ENCODE measurements at regions of chr6 and their contacts with region 1.

Region 1: GRCh38 chr6:159862103-159862502 is 28.7 kb upstream of the MAS1 start:
- DNase-seq: peak in 2 of 9 experiments; percentile 42 to 70
- ATAC-seq: peak; percentile 69
- H3K4me3 ChIP-seq: no peak overlapping the region
- H3K4me3 Mint-ChIP-seq: peak overlapping the region; percentile 10
- H3K27ac ChIP-seq: no peak overlapping the region
- H3K27ac Mint-ChIP-seq: peak overlapping the region; percentile 64
- H3K4me1 ChIP-seq: peaks cover 27% of the 10 kb centered on the region
- H3K4me1 Mint-ChIP-seq: peaks cover 22% of the 10 kb centered on the region
- H3K27me3 ChIP-seq: no peaks in the 10 kb centered on the region
- H3K27me3 Mint-ChIP-seq: peaks cover 3% of the 10 kb centered on the region
- CTCF ChIP-seq: no peak

Region 2: GRCh38 chr6:159800141-159800865 is 61.8 kb before region 1 on chr6 and contains the start of gene PNLDC1:
- CTCF ChIA-PET with region 1: no interaction called
- POLR2A ChIA-PET with region 1: no interaction called
- intact Hi-C with region 1: no loop called
- DNase-seq: no peak
- ATAC-seq: no peak
- H3K4me3 ChIP-seq: no peak within 1 kb of the TSS
- H3K4me3 Mint-ChIP-seq: no peak within 1 kb of the TSS
- H3K27ac ChIP-seq: no peak within 1 kb of the TSS
- H3K27ac Mint-ChIP-seq: no peak within 1 kb of the TSS
- H3K4me1 ChIP-seq: peaks cover 4% of the 10 kb centered on the region
- H3K4me1 Mint-ChIP-seq: peaks cover 20% of the 10 kb centered on the region
- H3K27me3 ChIP-seq: no peaks in the 10 kb centered on the region
- H3K27me3 Mint-ChIP-seq: no peaks in the 10 kb centered on the region
- CTCF ChIP-seq: no peak
- total RNA-seq, gene PNLDC1: not detected

Region 3: DNA sequence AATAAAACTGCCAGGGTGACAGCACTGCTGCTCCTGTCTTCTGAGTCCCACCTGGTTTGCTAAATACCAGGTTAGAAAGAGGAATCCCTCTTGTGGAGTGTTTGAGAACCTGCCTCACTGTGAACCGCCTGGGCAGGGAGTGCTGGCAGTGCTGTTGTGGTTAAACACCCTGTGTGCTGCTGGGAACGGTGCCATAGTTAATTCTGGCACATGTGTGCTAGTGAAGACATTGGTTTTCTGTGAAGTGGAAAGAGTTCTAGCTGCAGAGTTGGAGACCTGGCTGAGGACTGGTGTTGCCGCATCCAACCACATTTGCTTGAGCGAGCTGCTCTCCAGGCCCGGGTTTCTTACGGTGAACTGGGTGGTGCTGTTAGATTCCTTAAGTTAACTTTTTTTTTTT is 179.5 kb after region 1 on chr6:
- CTCF ChIA-PET with region 1: no interaction called
- POLR2A ChIA-PET with region 1: no interaction called
- intact Hi-C with region 1: loop called in 1 of 2 experiments (anchors 10 kb)
- DNase-seq: peak in 2 of 9 experiments; percentile 27 to 34
- ATAC-seq: peak; percentile 51
- H3K4me3 ChIP-seq: no peak overlapping the region
- H3K4me3 Mint-ChIP-seq: no peak overlapping the region
- H3K27ac ChIP-seq: no peak overlapping the region
- H3K27ac Mint-ChIP-seq: no peak overlapping the region
- H3K4me1 ChIP-seq: peaks cover 3% of the 10 kb centered on the region
- H3K4me1 Mint-ChIP-seq: peaks cover 18% of the 10 kb centered on the region
- H3K27me3 ChIP-seq: no peaks in the 10 kb centered on the region
- H3K27me3 Mint-ChIP-seq: no peaks in the 10 kb centered on the region
- CTCF ChIP-seq: no peak

Region 4: DNA sequence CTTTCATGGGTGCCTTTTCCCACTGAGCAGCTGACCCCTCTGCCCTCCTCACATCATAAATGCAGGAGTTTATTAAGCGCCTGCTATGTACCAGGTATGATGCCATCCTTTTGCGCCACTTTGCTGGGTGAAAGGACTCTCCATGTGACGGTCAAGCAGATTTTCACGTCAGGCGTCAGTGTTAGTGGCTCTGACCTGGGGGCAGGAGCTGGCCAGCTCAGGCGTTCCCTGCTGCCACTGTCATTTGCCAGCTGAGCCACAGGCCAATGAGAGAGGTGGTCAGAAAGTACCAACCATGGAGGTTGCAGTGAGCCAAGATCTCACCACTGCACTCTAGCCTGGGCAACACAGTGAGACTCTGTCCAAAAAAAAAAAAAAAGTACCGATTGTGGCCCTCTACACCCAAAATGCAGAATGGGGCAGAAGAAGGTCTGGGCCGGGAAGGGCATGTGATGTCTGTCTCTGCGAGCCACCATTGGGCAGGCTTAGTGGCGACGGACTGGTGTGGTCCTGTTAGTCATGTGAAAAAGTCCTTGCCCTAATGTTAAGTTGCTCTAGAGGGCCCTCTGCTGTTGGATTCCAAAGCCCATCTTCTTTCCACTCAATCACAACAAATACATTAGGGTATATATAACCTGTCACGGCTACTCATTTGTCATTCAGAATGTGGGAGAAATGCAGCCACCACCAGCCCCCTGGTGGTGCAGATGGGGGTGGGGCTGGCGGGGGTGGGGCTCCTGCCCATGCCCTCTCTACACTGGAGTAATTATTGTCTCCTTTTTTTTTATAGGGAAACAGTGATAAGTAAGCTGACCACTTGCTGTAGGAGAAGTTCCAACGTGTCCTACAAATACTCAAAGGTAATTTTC is 241.1 kb after region 1 on chr6:
- CTCF ChIA-PET with region 1: interaction called, 4 read pairs
- POLR2A ChIA-PET with region 1: no interaction called
- intact Hi-C with region 1: loop called (anchors 5 to 10 kb)
- DNase-seq: peak in 2 of 9 experiments; percentile 31 to 49
- ATAC-seq: no peak
- H3K4me3 ChIP-seq: no peak overlapping the region
- H3K4me3 Mint-ChIP-seq: no peak overlapping the region
- H3K27ac ChIP-seq: no peak overlapping the region
- H3K27ac Mint-ChIP-seq: no peak overlapping the region
- H3K4me1 ChIP-seq: no peaks in the 10 kb centered on the region
- H3K4me1 Mint-ChIP-seq: peaks cover 12% of the 10 kb centered on the region
- H3K27me3 ChIP-seq: no peaks in the 10 kb centered on the region
- H3K27me3 Mint-ChIP-seq: no peaks in the 10 kb centered on the region
- CTCF ChIP-seq: peak; percentile 22

Measured in CD8-positive, alpha-beta T cell (primary cell).